ENCODE measurements at regions of chr14 and their contacts with region 1.

Region 1: GRCh38 chr14:101767618-101768362 is 6.3 kb downstream of the PPP2R5C start:
- DNase-seq: no peak
- ATAC-seq: no peak
- H3K4me3 ChIP-seq: no peak overlapping the region
- H3K4me3 Mint-ChIP-seq: no peak overlapping the region
- H3K27ac ChIP-seq: no peak overlapping the region
- H3K27ac Mint-ChIP-seq: no peak overlapping the region
- H3K4me1 ChIP-seq: peaks cover 0 to 24% of the 10 kb centered on the region in 2 experiments
- H3K4me1 Mint-ChIP-seq: peaks cover 29 to 54% (median 49%) of the 10 kb centered on the region in 3 donors
- H3K27me3 ChIP-seq: no peaks in the 10 kb centered on the region
- H3K27me3 Mint-ChIP-seq: no peaks in the 10 kb centered on the region

Region 2: DNA sequence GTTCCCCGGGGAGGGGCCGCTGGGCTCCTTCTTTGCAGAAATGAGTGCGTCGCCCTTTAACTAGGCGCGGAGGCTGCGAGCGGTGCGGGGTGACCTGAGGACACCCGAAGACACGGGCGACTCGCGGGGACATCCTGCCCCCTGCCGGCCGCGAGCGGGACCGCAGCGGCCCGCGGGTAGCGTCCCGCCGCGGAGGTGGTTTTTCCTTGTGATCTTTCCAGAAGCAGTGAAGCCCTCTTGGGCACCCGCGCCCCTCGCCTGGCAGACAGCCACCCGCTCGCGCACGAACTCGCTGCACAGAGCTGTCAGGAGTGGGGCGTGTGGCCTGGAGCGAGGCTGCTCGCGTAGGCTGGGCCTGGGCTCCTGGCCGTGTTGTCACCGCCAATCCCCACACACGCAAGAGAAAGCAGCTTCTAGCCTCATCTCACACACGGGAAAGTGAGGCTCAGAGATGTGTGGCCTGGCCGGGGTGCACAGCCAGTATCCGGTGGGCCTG is 139.3 kb before region 1 on chr14:
- CTCF ChIA-PET with region 1: no interaction called
- POLR2A ChIA-PET with region 1: no interaction called
- DNase-seq: peak; percentile 36 to 82 (median 68)
- ATAC-seq: peak; percentile 91 to 95 (median 94)
- H3K4me3 ChIP-seq: no peak overlapping the region
- H3K4me3 Mint-ChIP-seq: peak overlapping the region in 1 of 3 donors; percentile 43
- H3K27ac ChIP-seq: no peak overlapping the region
- H3K27ac Mint-ChIP-seq: no peak overlapping the region
- H3K4me1 ChIP-seq: peaks cover 2 to 13% of the 10 kb centered on the region in 2 experiments
- H3K4me1 Mint-ChIP-seq: peaks cover 4 to 8% (median 5%) of the 10 kb centered on the region in 3 donors
- H3K27me3 ChIP-seq: peaks cover 0 to 32% of the 10 kb centered on the region in 2 experiments
- H3K27me3 Mint-ChIP-seq: peaks cover 2 to 3% of the 10 kb centered on the region in 2 donors

Region 3: GRCh38 chr14:101707068-101707842 is 60.5 kb before region 1 on chr14:
- CTCF ChIA-PET with region 1: interaction called, 3 to 30 read pairs
- POLR2A ChIA-PET with region 1: interaction called in 1 of 2 experiments, 6 read pairs
- DNase-seq: peak; percentile 43 to 94 (median 61)
- ATAC-seq: peak; percentile 50 to 69 (median 62)
- H3K4me3 ChIP-seq: peak overlapping the region in 1 of 2 donors; percentile 19
- H3K4me3 Mint-ChIP-seq: peak overlapping the region; percentile 37 to 68 (median 50)
- H3K27ac ChIP-seq: peak overlapping the region; percentile 85
- H3K27ac Mint-ChIP-seq: peak overlapping the region; percentile 89 to 92
- H3K4me1 ChIP-seq: peaks cover 16 to 59% of the 10 kb centered on the region in 2 experiments
- H3K4me1 Mint-ChIP-seq: peaks cover 41 to 56% (median 42%) of the 10 kb centered on the region in 3 donors
- H3K27me3 ChIP-seq: no peaks in the 10 kb centered on the region
- H3K27me3 Mint-ChIP-seq: no peaks in the 10 kb centered on the region

Region 4: GRCh38 chr14:101791919-101792572 is 24.3 kb after region 1 on chr14:
- CTCF ChIA-PET with region 1: interaction called in 1 of 2 experiments, 12 read pairs
- POLR2A ChIA-PET with region 1: interaction called, 3 to 9 read pairs
- DNase-seq: peak in 1 of 35 experiments; percentile 61
- ATAC-seq: peak; percentile 61 to 84 (median 73)
- H3K4me3 ChIP-seq: peak overlapping the region; percentile 5 to 41
- H3K4me3 Mint-ChIP-seq: peak overlapping the region; percentile 72 to 73 (median 72)
- H3K27ac ChIP-seq: peak overlapping the region; percentile 82
- H3K27ac Mint-ChIP-seq: peak overlapping the region; percentile 89 to 92
- H3K4me1 ChIP-seq: peaks cover 6 to 13% of the 10 kb centered on the region in 2 experiments
- H3K4me1 Mint-ChIP-seq: peaks cover 24 to 41% (median 25%) of the 10 kb centered on the region in 3 donors
- H3K27me3 ChIP-seq: no peaks in the 10 kb centered on the region
- H3K27me3 Mint-ChIP-seq: no peaks in the 10 kb centered on the region

Region 5: DNA sequence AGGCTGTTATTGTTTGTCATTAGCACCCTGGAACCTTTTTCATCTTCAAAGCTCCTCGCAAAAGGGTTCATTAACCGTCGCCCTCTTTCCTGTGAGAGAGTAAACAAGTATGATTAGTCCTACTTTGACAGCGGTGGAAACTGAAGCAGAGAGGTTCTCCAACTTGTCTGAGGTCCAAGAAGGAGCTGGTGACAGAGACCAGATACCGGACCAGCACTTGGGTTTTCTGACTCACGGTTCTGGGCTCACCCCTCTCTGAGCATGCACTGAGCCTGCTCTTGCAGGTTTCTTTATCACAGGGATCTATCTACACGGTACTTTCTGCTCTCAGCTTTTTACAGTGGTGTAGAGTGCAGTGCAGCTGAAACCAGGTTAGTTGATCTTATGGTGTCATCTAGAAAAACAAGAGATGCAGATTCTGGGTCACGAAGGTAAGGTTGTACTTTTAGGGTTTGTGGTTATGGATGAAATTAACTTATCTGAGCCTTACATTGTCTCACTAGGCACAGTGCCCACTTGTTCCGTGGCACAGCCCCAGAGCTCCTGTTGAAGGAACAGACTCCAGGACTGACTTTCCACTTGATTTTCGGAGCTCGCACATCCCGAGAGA is 55.8 kb after region 1 on chr14:
- CTCF ChIA-PET with region 1: interaction called in 1 of 2 experiments, 8 read pairs
- POLR2A ChIA-PET with region 1: interaction called in 1 of 2 experiments, 14 read pairs
- DNase-seq: peak in 34 of 35 experiments; percentile 28 to 86 (median 64)
- ATAC-seq: peak; percentile 66 to 68 (median 67)
- H3K4me3 ChIP-seq: peak overlapping the region; percentile 60 to 70
- H3K4me3 Mint-ChIP-seq: peak overlapping the region; percentile 81 to 91 (median 88)
- H3K27ac ChIP-seq: peak overlapping the region; percentile 99
- H3K27ac Mint-ChIP-seq: peak overlapping the region; percentile 97
- H3K4me1 ChIP-seq: peaks cover 62 to 67% of the 10 kb centered on the region in 2 experiments
- H3K4me1 Mint-ChIP-seq: peaks cover 68 to 88% (median 77%) of the 10 kb centered on the region in 3 donors
- H3K27me3 ChIP-seq: no peaks in the 10 kb centered on the region
- H3K27me3 Mint-ChIP-seq: no peaks in the 10 kb centered on the region

Region 6: GRCh38 chr14:101843665-101844064 is 75.9 kb after region 1 on chr14:
- CTCF ChIA-PET with region 1: interaction called, 3 to 23 read pairs
- POLR2A ChIA-PET with region 1: interaction called in 1 of 2 experiments, 3 read pairs
- DNase-seq: peak in 33 of 35 experiments; percentile 37 to 83 (median 55)
- ATAC-seq: peak; percentile 59 to 75 (median 70)
- H3K4me3 ChIP-seq: no peak overlapping the region
- H3K4me3 Mint-ChIP-seq: peak overlapping the region; percentile 3 to 29 (median 18)
- H3K27ac ChIP-seq: peak overlapping the region; percentile 55
- H3K27ac Mint-ChIP-seq: peak overlapping the region; percentile 77 to 88
- H3K4me1 ChIP-seq: peaks cover 23 to 79% of the 10 kb centered on the region in 2 experiments
- H3K4me1 Mint-ChIP-seq: peaks cover 93 to 97% (median 94%) of the 10 kb centered on the region in 3 donors
- H3K27me3 ChIP-seq: no peaks in the 10 kb centered on the region
- H3K27me3 Mint-ChIP-seq: no peaks in the 10 kb centered on the region

Region 7: DNA sequence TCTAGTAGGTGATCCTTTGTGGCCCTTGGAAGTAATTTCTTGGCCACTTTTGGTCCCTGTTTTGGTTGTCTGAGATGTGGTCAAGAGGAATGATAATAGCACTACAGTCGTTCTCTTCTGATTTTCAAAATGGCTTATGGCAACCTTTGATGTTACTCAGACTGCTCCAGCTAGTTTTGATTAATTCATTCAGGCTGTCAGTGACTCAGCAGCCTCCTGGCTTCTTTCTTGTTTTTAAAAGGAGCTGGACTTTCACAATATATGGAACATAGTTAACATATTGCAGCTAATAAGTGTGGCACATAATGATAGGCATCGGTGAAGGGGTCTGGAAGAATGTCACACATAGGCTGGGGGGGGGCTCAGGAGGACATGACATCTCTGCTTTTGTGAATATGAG is 419.3 kb after region 1 on chr14:
- CTCF ChIA-PET with region 1: no interaction called
- POLR2A ChIA-PET with region 1: no interaction called
- DNase-seq: no peak
- ATAC-seq: no peak
- H3K4me3 ChIP-seq: no peak overlapping the region
- H3K4me3 Mint-ChIP-seq: no peak overlapping the region
- H3K27ac ChIP-seq: no peak overlapping the region
- H3K27ac Mint-ChIP-seq: peak overlapping the region in 1 of 2 donors; percentile 11
- H3K4me1 ChIP-seq: peaks cover 0 to 13% of the 10 kb centered on the region in 2 experiments
- H3K4me1 Mint-ChIP-seq: peaks cover 48 to 65% (median 64%) of the 10 kb centered on the region in 3 donors
- H3K27me3 ChIP-seq: no peaks in the 10 kb centered on the region
- H3K27me3 Mint-ChIP-seq: no peaks in the 10 kb centered on the region